Naive thymus-derived CD4-positive, alpha-beta T cell (primary cell): ENCODE measurements at regions of chr6 and their contacts with region 1.

Region 1: DNA sequence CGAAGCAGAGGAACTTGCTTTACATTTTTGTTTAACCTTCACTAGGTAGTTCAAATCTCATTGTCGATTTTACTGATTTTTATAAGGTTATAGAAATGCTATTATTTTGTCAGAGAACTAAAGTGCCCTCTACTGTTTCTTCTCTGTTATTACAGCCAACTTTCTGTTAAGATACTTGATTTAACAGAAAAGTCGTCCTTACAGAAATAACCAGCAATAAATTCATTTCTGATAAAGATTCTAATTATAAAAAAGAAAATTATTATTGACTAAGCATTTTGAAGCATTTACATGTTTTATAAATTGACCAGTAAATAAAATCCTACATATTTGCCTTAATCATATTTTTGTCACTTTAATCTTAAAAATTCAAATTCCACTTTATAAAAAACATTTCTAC is 60.8 kb downstream of the OGFRL1 start:
- DNase-seq: peak in 4 of 9 donors; percentile 8 to 20 (median 16)
- ATAC-seq: peak; percentile 40
- H3K4me3 ChIP-seq: no peak overlapping the region
- H3K4me3 Mint-ChIP-seq: no peak overlapping the region
- H3K27ac ChIP-seq: no peak overlapping the region
- H3K27ac Mint-ChIP-seq: no peak overlapping the region
- H3K4me1 ChIP-seq: no peaks in the 10 kb centered on the region
- H3K4me1 Mint-ChIP-seq: no peaks in the 10 kb centered on the region
- H3K27me3 ChIP-seq: no peaks in the 10 kb centered on the region
- H3K27me3 Mint-ChIP-seq: peaks cover 0 to 8% (median 4%) of the 10 kb centered on the region in 5 donors

Region 2: GRCh38 chr6:70310063-70310694 is 1039.2 kb before region 1 on chr6:
- CTCF ChIA-PET with region 1: no interaction called
- POLR2A ChIA-PET with region 1: no interaction called
- intact Hi-C with region 1: loop called in 1 of 2 experiments (anchors 5 kb)
- DNase-seq: peak in 5 of 9 donors; percentile 7 to 21 (median 11)
- ATAC-seq: no peak
- H3K4me3 ChIP-seq: no peak overlapping the region
- H3K4me3 Mint-ChIP-seq: no peak overlapping the region
- H3K27ac ChIP-seq: no peak overlapping the region
- H3K27ac Mint-ChIP-seq: no peak overlapping the region
- H3K4me1 ChIP-seq: no peaks in the 10 kb centered on the region
- H3K4me1 Mint-ChIP-seq: peaks cover 0 to under 1% (median 0%) of the 10 kb centered on the region in 7 donors
- H3K27me3 ChIP-seq: no peaks in the 10 kb centered on the region
- H3K27me3 Mint-ChIP-seq: peaks cover 9 to 41% (median 28%) of the 10 kb centered on the region in 5 donors

Region 3: GRCh38 chr6:71190809-71191208 is 158.6 kb before region 1 on chr6:
- CTCF ChIA-PET with region 1: interaction called, 4 read pairs
- POLR2A ChIA-PET with region 1: no interaction called
- intact Hi-C with region 1: loop called (anchors 1 kb)
- DNase-seq: peak in 1 of 9 donors; percentile 2
- ATAC-seq: no peak
- H3K4me3 ChIP-seq: no peak overlapping the region
- H3K4me3 Mint-ChIP-seq: no peak overlapping the region
- H3K27ac ChIP-seq: no peak overlapping the region
- H3K27ac Mint-ChIP-seq: no peak overlapping the region
- H3K4me1 ChIP-seq: no peaks in the 10 kb centered on the region
- H3K4me1 Mint-ChIP-seq: peaks cover 0 to 3% (median 0%) of the 10 kb centered on the region in 7 donors
- H3K27me3 ChIP-seq: no peaks in the 10 kb centered on the region
- H3K27me3 Mint-ChIP-seq: peaks cover 0 to 11% (median 11%) of the 10 kb centered on the region in 5 donors

Region 4: DNA sequence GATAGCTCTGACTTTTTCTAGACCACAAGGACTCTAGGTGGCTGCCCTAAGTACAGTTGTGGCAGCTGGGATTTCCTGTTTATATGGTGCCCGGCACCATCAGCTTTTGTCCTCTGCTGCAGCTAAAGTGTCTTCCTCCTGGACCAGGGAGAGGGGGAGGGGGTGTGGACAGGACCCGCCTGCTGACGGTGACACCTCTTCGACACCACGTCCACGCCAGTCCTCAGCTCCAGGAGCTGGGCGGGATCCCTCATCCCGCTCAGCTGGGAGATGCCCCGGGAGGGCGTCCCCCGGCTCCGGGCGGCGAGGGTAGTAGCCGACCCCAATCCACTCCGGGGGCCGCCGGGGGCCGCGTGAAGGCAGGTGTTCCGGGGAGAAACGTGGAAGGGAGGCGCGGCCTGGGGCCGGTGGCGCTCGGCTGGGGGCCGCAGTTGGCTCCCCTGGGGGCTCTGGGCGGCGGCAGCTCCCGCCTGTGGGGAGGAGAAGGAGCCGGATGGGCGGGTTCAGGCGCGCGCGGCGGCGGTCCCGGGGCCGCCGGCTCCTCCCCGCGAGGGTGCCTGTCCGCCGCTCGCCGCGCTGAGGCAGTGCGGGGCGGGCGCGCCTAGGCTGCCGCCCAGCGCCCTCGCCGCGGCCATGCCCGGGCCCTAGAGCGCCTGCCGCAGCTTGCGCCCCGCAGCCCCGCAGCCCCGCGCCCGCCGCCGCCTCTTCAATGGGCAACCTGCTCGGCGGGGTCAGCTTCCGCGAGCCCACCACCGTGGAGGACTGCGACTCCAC is 61.0 kb before region 1 on chr6 and contains the start of gene OGFRL1:
- CTCF ChIA-PET with region 1: interaction called, 3 read pairs
- POLR2A ChIA-PET with region 1: no interaction called
- intact Hi-C with region 1: loop called in 1 of 2 experiments (anchors 2 kb)
- DNase-seq: peak; percentile 45 to 74 (median 64)
- ATAC-seq: peak; percentile 94
- H3K4me3 ChIP-seq: peak within 1 kb of the TSS; percentile 68
- H3K4me3 Mint-ChIP-seq: peak within 1 kb of the TSS; percentile 76 to 88 (median 83)
- H3K27ac ChIP-seq: peak within 1 kb of the TSS; percentile 70
- H3K27ac Mint-ChIP-seq: peak within 1 kb of the TSS; percentile 78 to 93 (median 83)
- H3K4me1 ChIP-seq: peaks cover 5 to 26% of the 10 kb centered on the region in 2 donors
- H3K4me1 Mint-ChIP-seq: peaks cover 29 to 43% (median 35%) of the 10 kb centered on the region in 7 donors
- H3K27me3 ChIP-seq: no peaks in the 10 kb centered on the region
- H3K27me3 Mint-ChIP-seq: peaks cover 0 to 24% (median 0%) of the 10 kb centered on the region in 5 donors
- total RNA-seq, gene OGFRL1: 4.3 to 30.4 (median 4.7) TPM